CD4-positive, alpha-beta memory T cell (primary cell): ENCODE measurements at regions of chr14 and their contacts with region 1.

Region 1: GRCh38 chr14:92951912-92952471 is 29.0 kb downstream of the CHGA start:
- DNase-seq: peak; percentile 66 to 76 (median 70)
- H3K4me3 ChIP-seq: no peak overlapping the region
- H3K4me3 Mint-ChIP-seq: no peak overlapping the region
- H3K27ac ChIP-seq: no peak overlapping the region
- H3K27ac Mint-ChIP-seq: peak overlapping the region in 4 of 7 donors; percentile 17 to 25 (median 23)
- H3K4me1 ChIP-seq: no peaks in the 10 kb centered on the region
- H3K4me1 Mint-ChIP-seq: peaks cover 3 to 9% (median 5%) of the 10 kb centered on the region in 4 donors
- H3K27me3 ChIP-seq: no peaks in the 10 kb centered on the region
- H3K27me3 Mint-ChIP-seq: no peaks in the 10 kb centered on the region

Region 2: DNA sequence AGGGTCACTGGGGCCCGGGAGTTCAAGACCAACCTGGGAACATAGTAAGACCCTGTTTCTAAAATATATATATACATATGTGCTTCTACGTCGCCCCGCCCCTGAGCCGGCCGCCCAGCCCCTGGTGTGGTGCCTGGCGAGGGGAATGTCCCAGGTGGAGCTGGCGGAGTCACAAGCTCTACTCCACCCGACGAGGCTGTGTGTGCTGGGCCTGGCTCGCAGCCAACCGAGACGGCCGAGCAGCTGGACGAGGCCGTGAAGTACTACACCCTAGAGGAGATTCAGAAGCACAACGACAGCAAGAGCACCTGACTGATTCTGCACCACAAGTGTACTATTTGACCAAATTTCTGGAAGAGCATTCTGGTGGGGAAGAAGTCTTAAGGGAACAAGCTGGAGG is 185.9 kb after region 1 on chr14:
- CTCF ChIA-PET with region 1: interaction called, 36 read pairs
- POLR2A ChIA-PET with region 1: interaction called, 3 read pairs
- intact Hi-C with region 1: no loop called
- DNase-seq: no peak
- H3K4me3 ChIP-seq: no peak overlapping the region
- H3K4me3 Mint-ChIP-seq: no peak overlapping the region
- H3K27ac ChIP-seq: no peak overlapping the region
- H3K27ac Mint-ChIP-seq: peak overlapping the region in 1 of 7 donors; percentile 48
- H3K4me1 ChIP-seq: no peaks in the 10 kb centered on the region
- H3K4me1 Mint-ChIP-seq: peaks cover 0 to 5% (median 2%) of the 10 kb centered on the region in 4 donors
- H3K27me3 ChIP-seq: no peaks in the 10 kb centered on the region
- H3K27me3 Mint-ChIP-seq: peaks cover 0 to 2% of the 10 kb centered on the region in 2 donors

Region 3: DNA sequence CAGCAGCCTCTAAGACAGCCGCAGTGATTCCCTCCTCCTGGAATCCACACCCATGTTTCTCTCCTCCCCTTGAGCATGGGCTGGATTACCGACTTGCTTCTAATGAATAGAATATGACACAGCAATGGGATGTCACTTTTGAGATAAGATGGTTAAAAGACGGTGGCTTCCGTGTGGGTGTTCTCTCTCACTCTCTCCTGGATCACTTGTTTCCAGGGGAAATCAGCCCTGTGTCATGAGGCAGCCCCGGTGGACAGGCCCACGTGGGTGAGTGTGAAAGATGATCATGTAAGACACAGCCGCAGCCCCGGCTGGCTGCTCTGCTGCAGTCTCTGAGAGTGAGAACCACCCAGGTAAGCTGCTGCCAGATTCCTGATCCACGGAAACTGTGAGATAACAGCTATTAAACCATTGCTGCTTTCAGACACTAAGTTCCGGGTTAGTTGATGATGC is 222.0 kb after region 1 on chr14:
- CTCF ChIA-PET with region 1: interaction called, 6 read pairs
- POLR2A ChIA-PET with region 1: no interaction called
- intact Hi-C with region 1: loop called (anchors 1 kb)
- DNase-seq: no peak
- H3K4me3 ChIP-seq: no peak overlapping the region
- H3K4me3 Mint-ChIP-seq: no peak overlapping the region
- H3K27ac ChIP-seq: no peak overlapping the region
- H3K27ac Mint-ChIP-seq: no peak overlapping the region
- H3K4me1 ChIP-seq: no peaks in the 10 kb centered on the region
- H3K4me1 Mint-ChIP-seq: peaks cover 0 to 6% (median 4%) of the 10 kb centered on the region in 4 donors
- H3K27me3 ChIP-seq: no peaks in the 10 kb centered on the region
- H3K27me3 Mint-ChIP-seq: no peaks in the 10 kb centered on the region

Region 4: DNA sequence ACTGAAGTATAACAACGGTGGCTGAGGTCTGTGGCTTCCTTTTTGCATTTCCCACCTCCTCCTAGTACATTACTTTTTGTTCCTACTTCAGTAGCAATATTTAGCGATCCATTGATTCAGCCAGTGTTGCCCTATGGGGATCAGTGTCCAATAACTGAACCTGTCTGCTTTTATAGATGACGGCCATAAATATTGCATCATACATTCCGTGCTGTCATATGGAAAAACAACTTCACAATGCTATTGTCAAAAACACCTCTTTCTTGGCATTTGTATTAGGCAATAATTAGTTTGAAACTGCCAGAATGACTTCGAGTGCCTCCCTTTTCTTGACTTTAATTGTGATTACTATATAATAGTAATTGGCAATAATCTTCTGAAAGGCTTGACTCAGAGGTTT is 686.8 kb after region 1 on chr14:
- CTCF ChIA-PET with region 1: no interaction called
- POLR2A ChIA-PET with region 1: no interaction called
- intact Hi-C with region 1: no loop called
- DNase-seq: no peak
- H3K4me3 ChIP-seq: no peak overlapping the region
- H3K4me3 Mint-ChIP-seq: no peak overlapping the region
- H3K27ac ChIP-seq: no peak overlapping the region
- H3K27ac Mint-ChIP-seq: no peak overlapping the region
- H3K4me1 ChIP-seq: no peaks in the 10 kb centered on the region
- H3K4me1 Mint-ChIP-seq: no peaks in the 10 kb centered on the region
- H3K27me3 ChIP-seq: peaks cover 3% of the 10 kb centered on the region
- H3K27me3 Mint-ChIP-seq: peaks cover 21 to 30% of the 10 kb centered on the region in 2 donors

Region 5: DNA sequence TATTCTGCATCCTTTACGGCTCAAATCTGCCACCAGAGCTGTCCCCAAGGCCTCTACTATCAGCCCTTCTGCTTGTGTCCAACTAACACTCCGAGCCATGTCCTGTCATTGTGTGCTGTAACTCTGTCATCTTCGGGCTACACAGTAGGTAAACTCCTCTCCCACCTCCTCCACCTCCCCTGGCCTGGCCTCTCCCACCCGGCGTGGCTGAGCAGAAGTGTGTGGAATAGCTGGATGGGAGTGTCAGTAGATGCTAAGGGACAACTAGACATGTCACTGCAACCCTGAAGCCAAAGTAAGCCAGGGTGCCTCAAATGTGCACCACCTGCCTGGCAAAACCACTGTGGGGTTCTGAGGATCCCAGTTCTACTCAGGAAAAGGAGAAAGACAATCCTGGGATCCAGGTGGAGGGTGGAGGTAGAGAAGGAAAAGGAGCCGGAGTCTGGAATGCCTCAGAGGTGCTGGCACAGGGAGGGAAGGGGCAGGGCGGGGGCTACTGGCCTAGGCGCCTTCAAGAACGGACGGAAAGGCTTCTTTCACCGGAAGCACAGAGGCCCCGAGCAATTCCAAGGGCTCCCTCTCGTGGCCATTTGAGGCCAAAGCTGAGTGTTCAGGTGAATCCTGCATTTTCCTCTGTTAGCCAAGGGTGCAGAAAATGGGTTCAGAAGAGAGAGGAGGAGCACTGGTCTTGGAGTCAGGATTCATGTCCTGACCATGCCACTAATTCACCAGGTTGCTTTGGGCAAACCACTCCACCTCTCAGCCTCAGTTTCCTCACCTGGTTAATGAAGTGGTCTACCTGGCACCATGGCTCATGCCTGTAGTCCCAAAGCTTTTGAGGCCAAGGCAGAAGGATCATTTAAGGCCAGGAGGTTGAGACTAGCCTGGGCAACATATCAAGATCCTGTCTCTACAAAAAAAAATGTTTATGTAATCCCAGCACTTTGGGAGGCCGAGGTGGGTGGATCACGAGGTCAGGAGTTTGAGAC is 954.6 kb after region 1 on chr14:
- CTCF ChIA-PET with region 1: no interaction called
- POLR2A ChIA-PET with region 1: no interaction called
- intact Hi-C with region 1: loop called (anchors 5 kb)
- DNase-seq: peak; percentile 19 to 51 (median 37)
- H3K4me3 ChIP-seq: no peak overlapping the region
- H3K4me3 Mint-ChIP-seq: peak overlapping the region in 1 of 8 donors; percentile 17
- H3K27ac ChIP-seq: no peak overlapping the region
- H3K27ac Mint-ChIP-seq: no peak overlapping the region
- H3K4me1 ChIP-seq: peaks cover 3% of the 10 kb centered on the region
- H3K4me1 Mint-ChIP-seq: peaks cover 0 to 2% (median 0%) of the 10 kb centered on the region in 4 donors
- H3K27me3 ChIP-seq: no peaks in the 10 kb centered on the region
- H3K27me3 Mint-ChIP-seq: peaks cover 2 to 11% of the 10 kb centered on the region in 2 donors